Activated CD4-positive, alpha-beta memory T cell treated with anti-CD3 and anti-CD28 coated beads for 36 hours (primary cell): ENCODE measurements at regions of chr1 and their contacts with region 1.

Region 1: DNA sequence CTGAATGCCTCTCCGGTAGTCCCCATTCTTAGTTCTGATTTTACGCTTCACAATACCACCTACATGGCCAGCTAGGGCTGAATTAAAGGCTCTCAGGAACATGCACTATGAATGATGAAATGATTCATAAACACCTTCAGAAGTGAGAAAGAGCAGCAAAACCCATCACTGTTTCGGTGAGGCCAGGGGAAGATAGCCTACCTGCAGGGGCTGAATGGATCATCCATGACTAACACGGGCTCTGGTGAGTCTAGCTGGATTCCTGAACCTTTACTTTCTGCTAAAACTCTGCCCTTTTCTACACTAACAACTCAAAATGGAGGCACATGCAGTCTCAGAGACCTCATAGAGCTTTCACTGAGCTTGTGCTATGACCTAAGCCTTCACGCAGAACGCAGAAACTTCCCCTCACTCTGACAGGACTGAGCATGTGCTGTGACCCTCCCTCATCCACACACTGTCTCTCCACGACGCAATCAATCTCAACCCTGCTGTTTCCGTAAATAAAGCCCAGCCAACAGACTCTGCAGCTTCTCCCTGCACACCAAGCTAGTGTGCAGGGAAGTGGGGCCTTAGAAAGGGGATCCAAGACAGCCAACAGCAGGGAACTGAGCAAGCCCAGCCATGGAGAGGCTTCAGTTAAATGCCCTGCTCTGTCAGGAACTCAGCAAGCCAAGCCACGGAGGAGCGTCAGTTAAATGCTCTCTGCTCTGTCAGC is 207.8 kb downstream of the SLC45A1 start:
- DNase-seq: peak; percentile 85
- H3K4me3 Mint-ChIP-seq: no peak overlapping the region
- H3K27ac Mint-ChIP-seq: no peak overlapping the region
- H3K4me1 Mint-ChIP-seq: peaks cover 18% of the 10 kb centered on the region
- H3K27me3 Mint-ChIP-seq: no peaks in the 10 kb centered on the region

Region 2: GRCh38 chr1:8329439-8329838 is 196.3 kb before region 1 on chr1:
- CTCF ChIA-PET with region 1: no interaction called
- POLR2A ChIA-PET with region 1: no interaction called
- intact Hi-C with region 1: no loop called
- DNase-seq: no peak
- H3K4me3 Mint-ChIP-seq: no peak overlapping the region
- H3K27ac Mint-ChIP-seq: no peak overlapping the region
- H3K4me1 Mint-ChIP-seq: no peaks in the 10 kb centered on the region
- H3K27me3 Mint-ChIP-seq: no peaks in the 10 kb centered on the region

Region 3: DNA sequence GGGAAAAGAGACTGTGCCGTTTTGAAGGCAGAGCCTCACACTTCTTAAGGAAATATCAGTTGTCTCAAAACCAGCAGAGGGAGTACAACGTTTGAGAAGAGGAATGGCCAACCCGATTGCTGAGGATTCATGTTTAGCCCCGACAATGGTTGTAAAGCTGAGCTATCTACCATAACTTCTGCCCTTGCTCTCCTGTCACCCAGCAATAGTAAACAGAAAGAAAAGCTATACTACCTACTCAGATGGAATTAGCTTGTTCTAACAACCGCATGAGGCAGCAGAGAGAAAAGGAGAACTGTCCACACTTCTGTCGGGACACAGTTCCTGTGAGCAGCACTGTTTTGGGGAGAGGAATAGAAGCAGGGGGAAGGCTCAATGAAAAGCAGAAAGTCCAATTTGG is 116.6 kb before region 1 on chr1:
- CTCF ChIA-PET with region 1: interaction called, 11 read pairs
- POLR2A ChIA-PET with region 1: no interaction called
- intact Hi-C with region 1: no loop called
- DNase-seq: peak; percentile 25
- H3K4me3 Mint-ChIP-seq: peak overlapping the region; percentile 25
- H3K27ac Mint-ChIP-seq: peak overlapping the region; percentile 83
- H3K4me1 Mint-ChIP-seq: peaks cover 77% of the 10 kb centered on the region
- H3K27me3 Mint-ChIP-seq: no peaks in the 10 kb centered on the region

Region 4: DNA sequence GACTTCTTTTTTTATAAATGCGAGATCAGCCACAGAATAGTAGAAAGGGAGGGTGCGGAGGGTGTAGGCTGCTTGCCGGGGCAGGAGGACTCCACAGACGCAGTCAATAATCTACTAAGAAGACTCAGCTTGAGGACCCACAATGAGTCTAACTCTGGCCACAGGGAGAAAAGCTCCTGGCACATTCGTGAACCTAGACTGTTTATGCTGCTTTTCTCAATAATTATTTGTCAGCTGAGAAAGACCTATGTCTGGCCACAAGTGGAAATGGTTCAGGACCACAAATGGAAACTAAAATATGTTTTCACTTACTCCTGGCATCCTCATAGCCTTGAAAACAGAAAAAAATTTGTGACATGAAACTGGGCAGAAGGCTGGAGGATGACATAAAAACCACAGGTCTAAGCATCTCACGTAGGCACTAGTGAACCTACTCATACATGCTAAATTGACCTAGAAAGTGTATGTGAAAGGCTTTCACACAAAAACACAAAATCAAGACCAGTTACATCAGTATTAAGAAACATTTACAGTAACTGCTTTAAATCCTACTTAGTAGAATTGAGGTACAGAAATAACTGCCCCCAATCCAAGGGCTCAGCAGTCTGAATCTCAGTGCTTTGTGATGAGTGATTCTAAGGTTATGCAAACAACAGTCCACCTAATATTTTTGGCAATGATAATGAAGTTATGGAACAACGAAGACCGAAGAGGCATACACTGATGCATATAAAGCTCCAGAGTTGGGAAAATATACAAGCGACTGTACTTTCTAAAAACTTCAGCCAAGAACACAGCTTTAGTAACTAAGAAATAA is 48.3 kb before region 1 on chr1:
- CTCF ChIA-PET with region 1: interaction called, 3 read pairs
- POLR2A ChIA-PET with region 1: interaction called, 9 read pairs
- intact Hi-C with region 1: loop called (anchors 1 kb)
- DNase-seq: peak; percentile 52
- H3K4me3 Mint-ChIP-seq: peak overlapping the region; percentile 26
- H3K27ac Mint-ChIP-seq: peak overlapping the region; percentile 40
- H3K4me1 Mint-ChIP-seq: peaks cover 50% of the 10 kb centered on the region
- H3K27me3 Mint-ChIP-seq: no peaks in the 10 kb centered on the region

Region 5: DNA sequence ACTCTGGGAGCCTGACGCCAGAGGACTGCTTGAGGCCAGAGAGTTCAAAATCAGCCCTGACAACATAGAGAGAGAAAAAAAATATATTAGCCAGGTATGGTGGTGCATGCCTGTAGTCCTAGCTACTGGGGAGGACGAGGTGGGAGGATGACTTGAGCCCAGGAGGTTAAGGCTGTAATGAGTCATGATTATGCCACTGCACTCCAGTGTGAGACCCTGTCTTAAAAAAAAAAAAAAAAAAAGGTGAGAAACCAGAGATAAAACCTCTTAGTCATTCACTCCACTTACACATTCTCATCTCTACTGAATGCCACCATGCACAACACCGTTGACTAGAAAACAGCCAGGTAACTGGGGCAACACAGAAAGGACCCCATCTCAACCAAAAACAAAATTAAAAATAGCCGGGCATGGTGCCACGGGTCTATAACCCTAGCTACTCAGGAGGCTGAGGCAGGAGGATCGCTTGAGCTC is 29.8 kb before region 1 on chr1:
- CTCF ChIA-PET with region 1: interaction called, 4 read pairs
- POLR2A ChIA-PET with region 1: interaction called, 3 read pairs
- intact Hi-C with region 1: loop called (anchors 1 kb)
- DNase-seq: peak; percentile 56
- H3K4me3 Mint-ChIP-seq: no peak overlapping the region
- H3K27ac Mint-ChIP-seq: peak overlapping the region; percentile 62
- H3K4me1 Mint-ChIP-seq: peaks cover 26% of the 10 kb centered on the region
- H3K27me3 Mint-ChIP-seq: no peaks in the 10 kb centered on the region

Region 6: DNA sequence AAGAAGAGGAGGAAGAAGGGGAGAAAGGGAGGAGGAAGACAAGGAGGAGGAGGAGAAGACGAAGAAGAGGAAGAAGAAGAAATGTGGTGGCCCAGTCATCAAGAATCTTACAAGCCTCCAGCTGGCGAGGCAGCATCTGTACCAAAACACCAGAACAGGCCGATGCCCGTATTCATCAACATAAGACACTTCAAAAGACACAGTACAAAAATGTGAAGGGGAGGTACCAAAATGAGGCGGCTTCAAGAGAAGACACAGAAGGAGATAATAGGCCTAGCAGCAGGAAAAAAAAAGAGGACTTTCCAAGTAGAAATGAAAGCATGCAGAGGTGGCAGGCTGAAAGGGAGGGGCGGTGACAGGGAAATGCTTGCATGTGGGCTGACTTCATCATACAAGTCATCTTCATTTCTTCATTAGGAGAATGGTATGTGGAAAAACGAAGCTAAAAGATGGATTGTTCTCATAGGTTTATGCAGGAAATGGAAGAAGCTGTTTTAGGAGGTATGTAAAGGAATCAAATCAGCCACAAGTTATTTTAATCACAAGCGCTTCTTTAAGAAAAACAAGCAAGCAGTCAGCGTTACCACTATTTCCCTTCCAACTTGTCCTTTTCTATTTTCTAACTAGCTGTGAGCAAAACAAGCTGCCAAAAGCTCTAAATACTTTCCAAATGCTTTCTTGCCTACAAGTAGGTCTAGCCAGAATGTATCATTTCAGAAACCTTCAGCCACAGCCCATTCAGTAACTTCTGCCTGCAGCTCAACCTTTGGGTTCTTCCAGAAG is 15.5 kb before region 1 on chr1:
- CTCF ChIA-PET with region 1: interaction called, 3 read pairs
- POLR2A ChIA-PET with region 1: interaction called, 3 read pairs
- intact Hi-C with region 1: loop called (anchors 1 kb)
- DNase-seq: peak; percentile 63
- H3K4me3 Mint-ChIP-seq: peak overlapping the region; percentile 62
- H3K27ac Mint-ChIP-seq: peak overlapping the region; percentile 88
- H3K4me1 Mint-ChIP-seq: peaks cover 35% of the 10 kb centered on the region
- H3K27me3 Mint-ChIP-seq: no peaks in the 10 kb centered on the region

Region 7: GRCh38 chr1:8540261-8540941 is 14.7 kb after region 1 on chr1:
- CTCF ChIA-PET with region 1: interaction called, 7 read pairs
- POLR2A ChIA-PET with region 1: interaction called, 4 read pairs
- intact Hi-C with region 1: loop called (anchors 1 kb)
- DNase-seq: no peak
- H3K4me3 Mint-ChIP-seq: no peak overlapping the region
- H3K27ac Mint-ChIP-seq: peak overlapping the region; percentile 69
- H3K4me1 Mint-ChIP-seq: peaks cover 40% of the 10 kb centered on the region
- H3K27me3 Mint-ChIP-seq: no peaks in the 10 kb centered on the region

Region 8: GRCh38 chr1:8569242-8569641 is 43.5 kb after region 1 on chr1:
- CTCF ChIA-PET with region 1: no interaction called
- POLR2A ChIA-PET with region 1: no interaction called
- intact Hi-C with region 1: no loop called
- DNase-seq: no peak
- H3K4me3 Mint-ChIP-seq: no peak overlapping the region
- H3K27ac Mint-ChIP-seq: no peak overlapping the region
- H3K4me1 Mint-ChIP-seq: peaks cover 6% of the 10 kb centered on the region
- H3K27me3 Mint-ChIP-seq: no peaks in the 10 kb centered on the region

Region 9: GRCh38 chr1:8580566-8580965 is 54.8 kb after region 1 on chr1:
- CTCF ChIA-PET with region 1: no interaction called
- POLR2A ChIA-PET with region 1: no interaction called
- intact Hi-C with region 1: no loop called
- DNase-seq: no peak
- H3K4me3 Mint-ChIP-seq: no peak overlapping the region
- H3K27ac Mint-ChIP-seq: no peak overlapping the region
- H3K4me1 Mint-ChIP-seq: no peaks in the 10 kb centered on the region
- H3K27me3 Mint-ChIP-seq: no peaks in the 10 kb centered on the region

Region 10: DNA sequence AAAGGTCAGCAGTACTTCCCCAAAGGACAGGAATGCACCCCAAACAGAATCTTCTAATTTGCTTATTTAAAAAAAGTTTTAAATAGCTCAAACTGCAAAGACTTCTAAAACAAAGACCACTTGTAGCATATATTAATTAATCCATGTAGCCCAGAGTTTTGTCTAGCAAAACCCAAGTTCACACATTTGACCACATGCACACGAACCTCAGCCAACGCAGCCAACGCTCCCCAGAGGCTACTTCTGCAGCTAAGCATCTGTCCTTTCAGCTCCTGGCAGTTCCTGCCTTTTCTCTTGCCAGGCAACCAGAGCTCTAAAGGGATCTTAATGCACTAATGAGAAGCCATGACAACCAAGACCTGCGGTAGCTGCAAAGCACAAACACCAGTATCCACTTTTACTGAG is 202.1 kb after region 1 on chr1:
- CTCF ChIA-PET with region 1: interaction called, 10 read pairs
- POLR2A ChIA-PET with region 1: no interaction called
- intact Hi-C with region 1: no loop called
- DNase-seq: no peak
- H3K4me3 Mint-ChIP-seq: no peak overlapping the region
- H3K27ac Mint-ChIP-seq: no peak overlapping the region
- H3K4me1 Mint-ChIP-seq: peaks cover 14% of the 10 kb centered on the region
- H3K27me3 Mint-ChIP-seq: no peaks in the 10 kb centered on the region